WTC11 (cell line): ENCODE measurements at regions of chr16 and their contacts with region 1.

Region 1: DNA sequence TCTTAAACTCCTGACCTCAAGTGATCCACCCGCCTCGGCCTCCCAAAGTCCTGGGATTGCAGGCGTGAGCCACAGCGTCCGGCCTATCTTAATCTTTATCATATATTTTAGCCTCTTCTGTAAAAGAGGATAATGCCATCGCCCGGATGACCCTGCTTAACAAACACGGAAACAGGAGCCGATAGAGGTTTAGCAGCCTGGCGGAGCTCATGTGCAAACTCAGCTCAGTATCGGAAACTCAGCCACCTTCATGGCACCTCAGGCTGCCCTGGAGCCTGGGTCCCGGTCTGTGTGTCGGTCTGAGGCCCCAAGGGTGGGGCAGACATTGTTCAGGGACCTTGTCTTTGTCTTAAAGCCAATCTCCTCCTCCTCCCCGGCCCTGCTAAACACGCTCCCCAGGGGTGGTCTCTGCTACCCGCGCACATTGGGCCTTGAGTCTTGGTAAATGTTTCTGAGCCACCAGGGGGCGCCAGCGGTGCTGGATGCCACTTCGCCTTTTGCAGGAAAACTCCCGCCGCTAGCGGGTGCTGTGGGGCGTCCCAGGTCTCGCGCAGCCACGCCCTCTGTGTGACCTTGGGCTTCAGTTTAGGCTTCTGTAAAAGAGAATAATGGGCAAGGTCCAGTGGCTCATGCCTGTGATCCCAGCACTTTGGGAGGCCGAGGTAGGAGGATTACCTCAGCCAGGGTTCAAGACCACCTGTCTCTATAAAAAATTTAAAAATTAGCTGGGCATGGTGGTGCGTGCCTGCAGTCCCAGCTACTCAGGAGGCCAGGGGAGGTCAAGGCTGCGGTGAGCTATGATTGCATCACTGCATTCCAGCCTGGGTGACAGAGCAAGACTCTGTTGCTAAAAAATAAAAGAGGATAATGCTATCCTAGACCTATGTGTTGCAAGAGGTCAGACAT is 2.7 kb downstream of the CETP start:
- DNase-seq: peak; percentile 98
- ATAC-seq: peak; percentile 91
- H3K4me3 Mint-ChIP-seq: peak overlapping the region; percentile 18; the same call in 1 of the 2 replicates
- H3K27ac Mint-ChIP-seq: no peak overlapping the region
- H3K4me1 Mint-ChIP-seq: peaks cover 7% of the 10 kb centered on the region
- H3K27me3 Mint-ChIP-seq: no peaks in the 10 kb centered on the region
- CTCF ChIP-seq: peak; percentile 95

Region 2: DNA sequence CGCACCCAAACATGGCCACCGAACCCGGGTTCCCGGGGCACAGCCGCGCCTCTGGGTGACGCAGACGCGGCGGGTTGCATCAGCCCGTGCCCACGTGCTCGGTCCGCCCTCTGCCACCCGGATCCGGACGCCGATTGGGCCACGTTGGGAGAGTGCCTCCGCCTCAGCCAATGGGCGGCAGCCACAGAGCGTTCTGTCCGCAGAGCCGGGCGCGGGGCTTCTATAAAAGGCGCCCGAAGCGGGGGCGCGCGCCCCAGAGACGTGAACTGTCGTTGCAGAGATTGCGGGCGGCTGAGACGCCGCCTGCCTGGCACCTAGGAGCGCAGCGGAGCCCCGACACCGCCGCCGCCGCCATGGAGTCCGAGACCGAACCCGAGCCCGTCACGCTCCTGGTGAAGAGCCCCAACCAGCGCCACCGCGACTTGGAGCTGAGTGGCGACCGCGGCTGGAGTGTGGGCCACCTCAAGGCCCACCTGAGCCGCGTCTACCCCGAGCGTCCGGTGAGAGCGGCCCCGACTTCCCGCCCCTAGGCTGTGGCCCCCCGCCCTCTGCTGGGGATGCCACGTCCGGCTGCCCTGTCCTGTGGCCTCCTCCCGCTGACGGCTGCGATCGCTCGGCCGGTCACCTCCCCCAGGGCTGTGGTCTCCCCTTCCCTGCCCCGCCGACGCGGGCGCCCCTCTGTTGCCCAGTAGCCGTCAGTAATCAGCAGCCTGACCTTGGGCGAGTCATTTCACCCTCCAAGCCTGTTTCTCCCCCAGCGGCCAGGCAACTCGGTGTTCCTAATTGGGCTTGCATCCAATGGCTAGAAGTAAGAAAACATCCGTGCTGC is 32.4 kb before region 1 on chr16 and contains the start of gene HERPUD1:
- CTCF ChIA-PET with region 1: interaction called, 10 read pairs
- POLR2A ChIA-PET with region 1: no interaction called
- DNase-seq: peak; percentile 96
- ATAC-seq: peak; percentile 94
- H3K4me3 Mint-ChIP-seq: peak within 1 kb of the TSS; percentile 94
- H3K27ac Mint-ChIP-seq: peak within 1 kb of the TSS; percentile 95
- H3K4me1 Mint-ChIP-seq: peaks cover 26% of the 10 kb centered on the region
- H3K27me3 Mint-ChIP-seq: no peaks in the 10 kb centered on the region
- CTCF ChIP-seq: no peak
- total RNA-seq, gene HERPUD1: 21.4 to 30.8 TPM (median 21.7 TPM) in 3 replicates

Region 3: GRCh38 chr16:56983211-56983751 is 18.8 kb after region 1 on chr16:
- CTCF ChIA-PET with region 1: interaction called, 22 read pairs
- POLR2A ChIA-PET with region 1: no interaction called
- DNase-seq: no peak
- ATAC-seq: no peak
- H3K4me3 Mint-ChIP-seq: no peak overlapping the region
- H3K27ac Mint-ChIP-seq: no peak overlapping the region
- H3K4me1 Mint-ChIP-seq: peaks cover 18% of the 10 kb centered on the region
- H3K27me3 Mint-ChIP-seq: peaks cover 11% of the 10 kb centered on the region
- CTCF ChIP-seq: no peak

Region 4: DNA sequence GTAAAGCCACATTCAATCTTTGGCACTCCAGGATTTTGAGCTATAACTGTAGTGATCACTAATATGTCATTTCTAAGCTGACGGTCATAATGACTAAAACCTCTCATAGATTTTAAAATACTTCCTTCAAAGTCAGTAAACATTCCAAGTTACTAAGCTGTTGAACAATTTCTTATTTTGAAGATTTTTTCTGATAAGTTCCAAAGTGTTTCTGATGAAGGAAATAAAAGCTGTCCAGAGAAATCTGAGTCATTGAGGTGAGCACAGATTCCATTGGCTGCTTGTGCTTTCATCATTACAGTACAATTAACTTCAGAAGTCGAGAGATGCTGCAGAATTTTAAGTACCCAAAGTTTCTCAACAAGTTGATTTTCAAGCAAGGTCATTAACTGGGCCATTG is 48.7 kb after region 1 on chr16:
- CTCF ChIA-PET with region 1: interaction called, 16 read pairs
- POLR2A ChIA-PET with region 1: no interaction called
- DNase-seq: no peak
- ATAC-seq: no peak
- H3K4me3 Mint-ChIP-seq: no peak overlapping the region
- H3K27ac Mint-ChIP-seq: no peak overlapping the region
- H3K4me1 Mint-ChIP-seq: peaks cover 7% of the 10 kb centered on the region
- H3K27me3 Mint-ChIP-seq: no peaks in the 10 kb centered on the region
- CTCF ChIP-seq: no peak

Region 5: GRCh38 chr16:57045694-57046381 is 81.3 kb after region 1 on chr16:
- CTCF ChIA-PET with region 1: interaction called, 71 read pairs
- POLR2A ChIA-PET with region 1: no interaction called
- DNase-seq: peak; percentile 71
- ATAC-seq: peak; percentile 94
- H3K4me3 Mint-ChIP-seq: peak overlapping the region; percentile 14; the same call in 1 of the 2 replicates
- H3K27ac Mint-ChIP-seq: no peak overlapping the region
- H3K4me1 Mint-ChIP-seq: peaks cover 20% of the 10 kb centered on the region
- H3K27me3 Mint-ChIP-seq: no peaks in the 10 kb centered on the region
- CTCF ChIP-seq: no peak

Region 6: DNA sequence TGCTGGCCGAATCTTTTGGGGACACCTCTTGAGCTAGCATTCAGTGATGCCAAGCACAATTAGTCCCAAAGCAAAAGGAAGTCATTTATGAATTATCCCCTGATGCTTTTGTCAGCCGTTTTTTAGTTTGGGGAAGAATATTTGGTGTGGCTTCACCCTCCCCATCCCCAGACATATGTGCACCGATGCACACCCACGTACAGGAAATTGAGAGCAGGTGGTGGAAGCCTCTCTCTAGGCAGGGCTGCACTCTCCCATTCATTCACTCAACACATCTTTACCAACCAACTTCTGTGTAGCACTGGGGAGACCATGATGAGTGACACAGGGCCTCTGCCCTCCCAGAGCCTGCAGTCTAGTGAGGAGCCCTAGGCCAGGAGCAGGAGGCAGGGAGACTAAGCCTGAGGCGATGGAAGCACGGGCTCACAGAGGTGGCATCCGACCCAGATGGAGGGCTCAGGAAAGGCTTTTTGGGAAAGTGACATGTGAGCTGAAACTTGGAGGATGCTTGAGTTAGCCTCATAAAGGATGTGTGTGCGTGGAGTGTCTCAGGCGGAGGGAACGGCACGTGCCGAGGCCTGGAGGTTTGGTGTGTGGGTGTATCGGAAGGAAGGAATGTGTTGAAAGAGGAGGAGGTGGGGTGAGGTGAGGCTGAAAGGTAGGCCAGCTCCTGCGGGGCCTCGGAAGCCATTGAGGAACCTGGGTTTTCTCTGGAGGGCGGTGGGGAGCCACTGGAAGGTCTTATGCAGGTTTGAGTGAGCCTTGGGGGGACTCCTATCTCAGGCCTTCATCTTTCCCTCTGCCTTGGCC is 177.5 kb after region 1 on chr16:
- CTCF ChIA-PET with region 1: no interaction called
- POLR2A ChIA-PET with region 1: no interaction called
- DNase-seq: no peak
- ATAC-seq: no peak
- H3K4me3 Mint-ChIP-seq: no peak overlapping the region
- H3K27ac Mint-ChIP-seq: peak overlapping the region; percentile 71
- H3K4me1 Mint-ChIP-seq: peaks cover 24% of the 10 kb centered on the region
- H3K27me3 Mint-ChIP-seq: no peaks in the 10 kb centered on the region
- CTCF ChIP-seq: no peak